ENCODE measurements at regions of chr2 and their contacts with region 1.

Region 1: DNA sequence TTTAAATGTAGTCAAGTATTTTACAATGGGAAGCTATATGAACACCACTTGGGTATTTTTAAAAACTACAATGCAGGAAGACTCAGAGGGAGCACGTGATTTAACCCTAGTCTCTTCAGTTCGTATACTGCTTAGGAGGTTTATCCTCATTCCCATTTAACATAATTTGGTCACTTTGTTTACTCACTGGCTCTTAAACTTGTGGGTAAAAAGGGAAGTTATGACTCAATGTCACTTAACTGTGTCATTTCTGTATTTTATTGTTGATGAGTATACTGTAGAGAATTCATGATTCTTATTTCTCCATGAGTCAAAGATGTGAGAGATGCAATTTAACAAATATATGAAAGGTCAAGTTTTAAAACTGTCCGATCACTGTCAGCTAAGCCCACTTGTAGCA is 48.2 kb downstream of the SLC66A3 start:
- DNase-seq: peak; percentile 71
- H3K4me3 ChIP-seq: no peak overlapping the region
- H3K27ac ChIP-seq: peak overlapping the region; percentile 84
- H3K4me1 ChIP-seq: peaks cover 27% of the 10 kb centered on the region
- H3K27me3 ChIP-seq: no peaks in the 10 kb centered on the region
- CTCF ChIP-seq: no peak
- POLR2A ChIP-seq: no peak

Region 2: DNA sequence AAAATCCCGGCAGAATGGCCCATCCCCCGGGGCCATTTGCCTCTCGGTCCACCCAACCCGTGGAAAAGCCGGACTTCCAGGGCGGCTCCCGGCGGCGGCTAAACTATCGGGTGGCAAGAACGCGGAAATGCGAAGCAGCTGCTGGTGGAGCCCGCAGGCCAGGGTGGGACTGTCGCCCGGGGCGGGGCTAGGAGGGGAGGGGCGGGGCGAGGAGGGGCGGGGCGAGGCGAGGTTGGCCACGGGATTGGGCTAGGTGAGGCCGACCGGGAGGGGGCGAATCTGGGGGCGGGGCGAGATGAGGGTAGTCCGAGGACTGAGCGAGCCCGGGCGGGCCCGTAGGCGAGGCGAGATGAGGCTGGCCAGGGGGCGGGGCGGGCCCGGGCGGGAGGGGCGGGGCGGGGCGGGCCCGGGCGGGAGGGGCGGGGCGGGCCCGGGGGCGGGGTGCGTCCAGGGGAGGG is 48.5 kb before region 1 on chr2:
- CTCF ChIA-PET with region 1: no interaction called
- POLR2A ChIA-PET with region 1: no interaction called
- dilution Hi-C with region 1: no loop called
- intact Hi-C with region 1: loop called (anchors 2 kb)
- DNase-seq: peak; percentile 91
- H3K4me3 ChIP-seq: peak overlapping the region; percentile 50 to 62 (median 61)
- H3K27ac ChIP-seq: peak overlapping the region; percentile 90
- H3K4me1 ChIP-seq: peaks cover 11% of the 10 kb centered on the region
- H3K27me3 ChIP-seq: no peaks in the 10 kb centered on the region
- CTCF ChIP-seq: no peak
- POLR2A ChIP-seq: no peak

Region 3: DNA sequence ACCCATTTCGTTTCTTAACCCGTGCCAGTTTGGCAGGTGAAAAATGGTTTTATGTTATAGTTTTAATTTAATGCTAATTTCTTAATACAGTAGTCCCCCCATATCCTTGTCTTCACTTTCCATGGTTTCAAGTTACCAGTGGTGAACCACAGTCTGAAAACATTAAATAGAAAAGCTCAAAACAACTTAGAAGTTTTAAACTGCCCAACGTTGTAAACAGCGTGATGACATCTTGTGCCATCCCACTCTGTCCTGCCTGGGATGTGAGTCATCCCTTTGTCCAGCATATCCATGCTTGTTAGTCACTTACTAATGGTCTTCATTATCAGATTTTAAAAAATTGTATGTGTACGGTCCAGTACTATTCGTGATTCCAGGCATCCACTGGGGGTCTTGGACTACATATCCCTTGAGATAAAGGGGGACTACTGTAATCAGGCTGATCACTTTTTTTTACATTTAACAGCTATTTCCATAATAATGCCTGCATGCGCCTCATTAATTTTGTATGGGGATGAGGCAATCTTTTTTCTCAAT is 16.3 kb before region 1 on chr2:
- CTCF ChIA-PET with region 1: interaction called, 7 read pairs
- POLR2A ChIA-PET with region 1: interaction called, 10 read pairs
- dilution Hi-C with region 1: no loop called
- intact Hi-C with region 1: no loop called
- DNase-seq: peak; percentile 41
- H3K4me3 ChIP-seq: no peak overlapping the region
- H3K27ac ChIP-seq: peak overlapping the region; percentile 31
- H3K4me1 ChIP-seq: peaks cover 9% of the 10 kb centered on the region
- H3K27me3 ChIP-seq: no peaks in the 10 kb centered on the region
- CTCF ChIP-seq: no peak
- POLR2A ChIP-seq: no peak

Measured in endothelial cell of umbilical vein (primary cell).